ENCODE measurements at regions of chr16 and their contacts with region 1.

Region 1: DNA sequence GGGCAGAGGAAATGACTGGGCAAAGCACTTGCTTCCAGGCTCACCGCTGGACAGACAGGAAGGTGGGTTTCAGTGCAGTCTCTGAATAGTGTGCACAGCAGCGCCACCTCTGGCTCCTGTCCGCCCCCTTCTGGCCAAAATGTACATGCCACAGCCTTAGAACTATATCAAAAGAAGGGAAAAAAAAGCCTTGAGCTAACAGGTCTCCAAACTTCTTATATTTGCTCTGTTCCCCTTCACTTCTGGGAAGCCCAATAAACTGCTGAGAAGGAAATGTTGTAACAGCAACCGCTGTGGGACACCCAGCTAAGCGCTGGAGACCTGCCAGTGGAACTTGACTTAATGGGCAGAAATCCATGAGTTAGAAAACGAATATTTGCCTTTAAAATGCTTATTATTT is 17.5 kb downstream of the COG7 start:
- DNase-seq: peak in 9 of 10 donors; percentile 14 to 59 (median 41)
- H3K4me3 ChIP-seq: no peak overlapping the region
- H3K27ac ChIP-seq: peak overlapping the region in 1 of 59 donors; percentile 34
- H3K27me3 ChIP-seq: no peaks in the 10 kb centered on the region
- CTCF ChIP-seq: peak; percentile 39 to 83 (median 74)

Region 2: GRCh38 chr16:22898874-22899348 is 536.6 kb before region 1 on chr16:
- intact Hi-C with region 1: loop called (anchors 5 kb)
- DNase-seq: peak; percentile 52 to 85 (median 82)
- H3K4me3 ChIP-seq: peak overlapping the region in 12 of 59 donors; percentile 8 to 47 (median 28)
- H3K27ac ChIP-seq: peak overlapping the region in 5 of 59 donors; percentile 1 to 50 (median 18)
- H3K27me3 ChIP-seq: peaks cover 0 to 10% (median 0%) of the 10 kb centered on the region in 45 donors
- CTCF ChIP-seq: peak; percentile 76 to 99 (median 94)

Region 3: GRCh38 chr16:22977294-22977697 is 458.2 kb before region 1 on chr16:
- intact Hi-C with region 1: loop called in 1 of 2 experiments (anchors 10 kb)
- DNase-seq: no peak
- H3K4me3 ChIP-seq: no peak overlapping the region
- H3K27ac ChIP-seq: no peak overlapping the region
- H3K27me3 ChIP-seq: peaks cover 0 to 4% (median 0%) of the 10 kb centered on the region in 45 donors
- CTCF ChIP-seq: peak in 54 of 56 donors; percentile 13 to 66 (median 46)

Region 4: DNA sequence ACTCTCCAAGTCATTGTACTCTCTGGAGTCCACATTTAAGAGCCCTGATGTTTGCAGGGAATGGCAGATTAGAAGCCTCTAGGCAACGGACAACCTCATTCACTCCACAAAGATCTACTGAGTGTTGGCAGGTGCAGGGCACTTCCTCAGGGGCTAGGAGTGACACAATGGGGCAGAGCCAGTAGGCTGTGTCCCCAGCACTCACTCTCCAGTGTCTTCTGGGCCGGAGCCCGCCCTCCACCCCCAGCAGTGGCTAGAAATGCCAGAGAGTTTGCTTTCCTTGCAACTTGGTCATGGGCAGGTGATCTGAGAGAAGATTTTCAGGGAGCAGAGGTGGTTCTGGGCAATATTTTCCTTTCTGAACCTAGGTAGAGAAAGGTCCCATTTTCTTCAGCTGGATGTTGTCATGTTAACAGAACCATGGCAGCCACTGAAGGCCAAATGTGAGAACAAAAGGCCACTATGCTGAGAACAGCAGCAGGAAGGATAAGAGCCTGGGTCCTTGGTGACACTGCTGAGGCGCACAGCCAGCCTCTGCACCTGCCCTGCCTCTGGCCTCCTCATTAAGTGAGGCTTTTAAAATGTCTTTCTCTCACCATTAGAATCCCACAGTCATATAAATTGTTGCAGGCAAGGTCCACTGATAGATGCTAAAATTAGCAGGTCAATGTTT is 382.5 kb before region 1 on chr16:
- intact Hi-C with region 1: loop called in 1 of 2 experiments (anchors 10 kb)
- DNase-seq: peak in 1 of 10 donors; percentile 53
- H3K4me3 ChIP-seq: no peak overlapping the region
- H3K27ac ChIP-seq: peak overlapping the region; percentile 31 to 97 (median 90)
- H3K27me3 ChIP-seq: peaks cover 0 to 3% (median 0%) of the 10 kb centered on the region in 45 donors
- CTCF ChIP-seq: no peak

Region 5: GRCh38 chr16:23072084-23072599 is 363.4 kb before region 1 on chr16:
- intact Hi-C with region 1: loop called in 1 of 2 experiments (anchors 10 kb)
- DNase-seq: peak in 2 of 10 donors; percentile 38 to 57
- H3K4me3 ChIP-seq: peak overlapping the region in 2 of 59 donors; percentile 2 to 7
- H3K27ac ChIP-seq: peak overlapping the region in 45 of 59 donors; percentile 4 to 84 (median 63)
- H3K27me3 ChIP-seq: no peaks in the 10 kb centered on the region
- CTCF ChIP-seq: no peak

Region 6: GRCh38 chr16:23182460-23183309 is 252.8 kb before region 1 on chr16 and contains the start of gene SCNN1G:
- intact Hi-C with region 1: loop called (anchors 1 to 2 kb)
- DNase-seq: peak; percentile 45 to 82 (median 60)
- H3K4me3 ChIP-seq: peak within 1 kb of the TSS; percentile 34 to 77 (median 60)
- H3K27ac ChIP-seq: peak within 1 kb of the TSS in 2 of 59 donors; percentile 28 to 78
- H3K27me3 ChIP-seq: peaks cover 0 to 43% (median 13%) of the 10 kb centered on the region in 45 donors
- CTCF ChIP-seq: peak; percentile 63 to 99 (median 88)
- total RNA-seq, gene SCNN1G: 0.13 to 1.1 (median 0.31) TPM in 107 of 120 experiments, not detected in the others